ENCODE measurements at regions of chr5 and their contacts with region 1.

Region 1: DNA sequence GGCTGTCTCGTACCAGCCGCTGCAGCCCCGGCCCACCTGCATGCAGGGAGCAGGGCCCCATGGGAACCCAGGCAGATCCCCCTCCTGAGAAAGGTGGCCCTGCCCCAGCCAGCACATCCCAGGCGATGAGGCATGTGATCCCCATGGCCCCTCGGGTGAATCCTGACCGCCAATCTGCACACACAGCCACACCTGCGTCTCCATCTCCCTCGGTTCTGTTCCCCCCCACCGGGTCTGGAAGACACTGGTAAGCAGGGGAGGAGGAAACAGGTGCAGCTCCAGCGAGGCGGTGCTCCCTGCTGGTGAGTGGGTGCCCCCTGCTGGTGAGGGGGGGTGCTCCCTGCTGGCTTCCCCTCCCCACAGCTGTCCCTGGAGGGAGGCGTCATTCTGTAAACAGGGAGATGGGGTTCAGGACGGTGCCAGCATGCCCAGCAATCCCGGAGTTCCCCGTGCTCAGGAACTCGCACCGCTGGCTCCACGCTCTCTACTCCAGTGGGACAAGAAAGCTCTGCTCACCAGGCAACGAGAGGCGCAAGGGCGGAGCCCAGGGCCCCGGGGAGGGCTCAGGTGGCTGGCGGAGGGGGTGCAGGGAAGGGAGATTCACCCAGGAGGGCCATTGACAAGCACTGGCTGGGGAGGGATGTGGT is 28.4 kb upstream of the SLC12A7 start:
- DNase-seq: peak; percentile 76
- H3K4me3 ChIP-seq: no peak overlapping the region
- H3K27ac ChIP-seq: no peak overlapping the region
- H3K4me1 ChIP-seq: peaks cover 11% of the 10 kb centered on the region
- H3K27me3 ChIP-seq: no peaks in the 10 kb centered on the region
- CTCF ChIP-seq: peak; percentile 88

Region 2: DNA sequence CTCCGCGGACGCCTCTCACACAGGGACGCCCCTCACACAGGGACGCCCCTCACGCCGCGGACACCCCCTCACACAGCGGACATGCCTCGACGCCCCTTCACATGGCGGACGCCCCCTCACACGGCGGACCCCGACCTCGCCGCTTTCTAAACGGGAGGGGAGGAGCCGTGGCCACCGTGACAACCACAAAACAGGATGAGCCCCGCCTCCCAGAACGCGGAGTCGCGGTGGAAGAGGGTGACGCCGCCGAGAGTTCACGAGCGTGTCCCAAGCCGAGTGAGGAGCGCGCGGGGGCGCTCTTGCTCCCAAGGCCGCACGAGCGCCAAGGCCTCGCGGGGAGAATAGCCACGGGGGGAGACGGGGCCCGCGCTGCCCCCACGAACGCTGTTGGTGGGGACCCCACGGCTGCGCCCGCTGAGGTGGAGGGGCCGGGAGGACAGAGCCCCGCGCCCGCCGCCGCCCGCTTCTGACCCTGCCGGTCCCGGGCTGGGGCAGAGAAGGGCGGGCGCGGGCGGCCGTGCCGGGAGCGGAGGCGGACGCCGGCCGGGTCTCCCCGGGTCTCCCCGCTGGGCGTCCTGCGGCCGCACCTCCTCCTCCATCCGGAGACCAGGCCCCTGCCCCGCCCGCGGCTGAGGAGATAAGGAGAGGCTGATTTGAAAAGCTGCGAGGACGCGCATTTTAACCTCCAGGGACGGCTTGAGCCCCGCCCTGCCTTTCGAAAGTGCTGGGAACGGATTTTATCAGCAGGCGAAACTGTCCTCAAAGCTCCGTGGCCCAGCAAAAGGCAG is 135.6 kb before region 1 on chr5:
- CTCF ChIA-PET with region 1: interaction called, 3 read pairs
- POLR2A ChIA-PET with region 1: no interaction called
- intact Hi-C with region 1: loop called (anchors 5 kb)
- DNase-seq: peak; percentile 85
- H3K4me3 ChIP-seq: peak overlapping the region; percentile 58
- H3K27ac ChIP-seq: peak overlapping the region; percentile 58
- H3K4me1 ChIP-seq: peaks cover 25% of the 10 kb centered on the region
- H3K27me3 ChIP-seq: no peaks in the 10 kb centered on the region
- CTCF ChIP-seq: peak; percentile 77

Region 3: GRCh38 chr5:1186351-1187233 is 46.3 kb after region 1 on chr5:
- CTCF ChIA-PET with region 1: no interaction called
- POLR2A ChIA-PET with region 1: interaction called, 19 read pairs
- intact Hi-C with region 1: no loop called
- DNase-seq: no peak
- H3K4me3 ChIP-seq: no peak overlapping the region
- H3K27ac ChIP-seq: no peak overlapping the region
- H3K4me1 ChIP-seq: no peaks in the 10 kb centered on the region
- H3K27me3 ChIP-seq: peaks cover 30% of the 10 kb centered on the region
- CTCF ChIP-seq: no peak